ENCODE measurements at regions of chr11 and their contacts with region 1.

Region 1: DNA sequence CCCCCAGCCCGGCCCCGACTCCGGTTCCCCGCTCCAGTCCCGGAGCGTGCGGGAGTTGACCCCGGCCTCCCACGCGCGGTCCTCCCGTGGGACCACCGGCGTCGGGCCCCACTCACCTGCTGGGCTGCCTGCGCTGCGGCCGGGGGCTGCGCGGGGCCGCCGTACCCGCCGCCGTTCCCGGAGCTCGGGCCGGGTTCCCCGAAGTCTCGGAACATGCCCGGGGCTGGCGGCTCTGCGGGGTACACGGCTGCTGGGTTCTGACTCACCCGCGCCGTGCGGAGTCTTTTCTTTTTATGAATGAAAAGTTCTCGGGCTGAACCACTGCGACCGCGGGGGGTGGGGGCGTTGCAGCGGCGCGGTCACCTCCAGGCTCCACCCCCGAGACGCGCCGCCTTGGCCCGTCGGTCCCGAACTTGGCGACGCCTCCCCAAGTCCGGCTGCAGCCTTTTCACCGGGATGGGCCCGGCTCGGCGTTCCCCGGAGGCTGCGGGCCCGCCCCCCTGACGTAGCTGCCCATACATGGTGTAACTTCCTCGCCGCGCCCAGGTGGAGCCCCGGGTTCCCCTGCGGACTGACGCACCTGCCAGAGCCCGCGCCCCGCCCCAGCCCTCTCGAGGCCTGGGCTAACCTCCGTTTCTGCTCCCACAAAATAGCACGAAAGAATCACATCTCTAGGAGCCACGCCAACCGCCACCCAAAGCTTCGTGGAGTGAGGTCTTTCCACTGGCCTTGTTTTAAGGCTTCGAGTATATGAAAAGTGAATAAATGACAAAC is at the start of gene FOSL1:
- DNase-seq: peak; percentile 81
- H3K4me3 ChIP-seq: peak within 1 kb of the TSS; percentile 59 to 82
- H3K27ac ChIP-seq: peak within 1 kb of the TSS in 1 of 2 experiments; percentile 95; a peak in 3 of 4 replicates
- H3K4me1 ChIP-seq: peaks cover 0 to 44% of the 10 kb centered on the region in 2 experiments; a peak in 3 of 4 replicates
- H3K27me3 ChIP-seq: no peaks in the 10 kb centered on the region
- CTCF ChIP-seq: no peak
- EP300 ChIP-seq: peak in 1 of 2 experiments; percentile 52; a peak in 1 of 4 replicates
- RAD21 ChIP-seq: no peak
- polyA plus RNA-seq, gene FOSL1: 17.9 and 30.1 TPM in 2 replicates

Region 2: GRCh38 chr11:65911682-65912568 is 11.6 kb after region 1 on chr11:
- CTCF ChIA-PET with region 1: interaction called, 36 read pairs
- POLR2A ChIA-PET with region 1: no interaction called
- DNase-seq: peak; percentile 84
- H3K4me3 ChIP-seq: no peak overlapping the region
- H3K27ac ChIP-seq: peak overlapping the region in 1 of 2 experiments; percentile 97; a peak in 2 of 4 replicates
- H3K4me1 ChIP-seq: peaks cover 12 to 47% of the 10 kb centered on the region in 2 experiments; a peak in 3 of 4 replicates
- H3K27me3 ChIP-seq: no peaks in the 10 kb centered on the region
- CTCF ChIP-seq: peak; percentile 51
- EP300 ChIP-seq: peak in 1 of 2 experiments; percentile 43; a peak in 1 of 4 replicates
- RAD21 ChIP-seq: peak; percentile 69

Region 3: GRCh38 chr11:65941720-65942310 is 41.5 kb after region 1 on chr11:
- CTCF ChIA-PET with region 1: no interaction called
- POLR2A ChIA-PET with region 1: no interaction called
- DNase-seq: no peak
- H3K4me3 ChIP-seq: no peak overlapping the region
- H3K27ac ChIP-seq: peak overlapping the region in 1 of 2 experiments; percentile 65; a peak in 2 of 4 replicates
- H3K4me1 ChIP-seq: peaks cover 0 to 12% of the 10 kb centered on the region in 2 experiments; a peak in 2 of 4 replicates
- H3K27me3 ChIP-seq: no peaks in the 10 kb centered on the region
- CTCF ChIP-seq: no peak
- EP300 ChIP-seq: no peak
- RAD21 ChIP-seq: no peak

Region 4: DNA sequence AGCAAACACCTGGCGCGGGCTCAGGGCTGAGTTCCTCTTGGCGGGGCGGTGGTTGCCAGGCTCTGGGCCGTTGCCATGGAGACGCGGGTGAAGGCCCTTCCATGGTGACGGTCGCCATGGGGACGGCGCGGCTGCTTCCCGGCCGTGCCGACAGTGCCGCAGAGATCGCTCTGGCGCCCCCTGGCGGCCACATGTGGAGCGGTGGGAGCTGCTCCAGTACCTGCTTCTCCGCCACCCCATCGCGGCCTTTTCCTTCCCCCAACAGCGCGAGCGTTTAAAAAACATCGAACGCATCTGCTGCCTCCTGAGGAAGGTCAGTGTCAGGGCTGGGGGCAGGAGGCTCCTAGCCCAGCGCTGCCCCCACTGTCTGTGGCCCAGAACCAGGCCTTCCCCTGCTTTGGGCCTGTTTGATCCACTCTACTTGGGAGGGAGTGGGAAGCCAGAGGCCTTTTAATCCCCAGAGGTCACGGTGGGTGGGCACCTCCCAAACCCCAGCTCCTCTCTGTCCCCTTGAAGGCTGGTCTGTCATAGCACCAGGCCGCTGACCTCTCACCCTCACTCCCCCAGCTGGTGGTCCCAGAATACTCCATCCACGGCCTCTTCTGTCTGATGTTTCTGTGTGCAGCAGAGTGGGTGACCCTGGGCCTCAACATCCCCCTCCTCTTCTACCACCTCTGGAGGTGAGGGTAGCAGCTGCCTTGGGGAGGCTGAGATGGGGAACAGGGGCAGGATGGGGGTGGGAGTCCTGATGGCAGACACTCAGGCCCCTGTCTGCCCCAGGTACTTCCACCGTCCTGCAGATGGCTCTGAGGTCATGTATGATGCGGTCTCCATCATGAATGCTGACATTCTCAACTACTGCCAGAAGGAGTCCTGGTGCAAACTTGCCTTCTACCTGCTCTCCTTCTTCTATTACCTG is 382.4 kb after region 1 on chr11:
- CTCF ChIA-PET with region 1: no interaction called
- POLR2A ChIA-PET with region 1: no interaction called
- DNase-seq: peak; percentile 98
- H3K4me3 ChIP-seq: peak overlapping the region in 1 of 2 experiments; percentile 48; a peak in 2 of 4 replicates
- H3K27ac ChIP-seq: peak overlapping the region; percentile 47 to 57; a peak in 3 of 4 replicates
- H3K4me1 ChIP-seq: peaks cover 0 to 55% of the 10 kb centered on the region in 2 experiments; a peak in 1 of 4 replicates
- H3K27me3 ChIP-seq: no peaks in the 10 kb centered on the region
- CTCF ChIP-seq: peak; percentile 95
- EP300 ChIP-seq: no peak
- RAD21 ChIP-seq: peak; percentile 66